Endothelial cell of umbilical vein (primary cell): ENCODE measurements at regions of chr4 and their contacts with region 1.

Region 1: DNA sequence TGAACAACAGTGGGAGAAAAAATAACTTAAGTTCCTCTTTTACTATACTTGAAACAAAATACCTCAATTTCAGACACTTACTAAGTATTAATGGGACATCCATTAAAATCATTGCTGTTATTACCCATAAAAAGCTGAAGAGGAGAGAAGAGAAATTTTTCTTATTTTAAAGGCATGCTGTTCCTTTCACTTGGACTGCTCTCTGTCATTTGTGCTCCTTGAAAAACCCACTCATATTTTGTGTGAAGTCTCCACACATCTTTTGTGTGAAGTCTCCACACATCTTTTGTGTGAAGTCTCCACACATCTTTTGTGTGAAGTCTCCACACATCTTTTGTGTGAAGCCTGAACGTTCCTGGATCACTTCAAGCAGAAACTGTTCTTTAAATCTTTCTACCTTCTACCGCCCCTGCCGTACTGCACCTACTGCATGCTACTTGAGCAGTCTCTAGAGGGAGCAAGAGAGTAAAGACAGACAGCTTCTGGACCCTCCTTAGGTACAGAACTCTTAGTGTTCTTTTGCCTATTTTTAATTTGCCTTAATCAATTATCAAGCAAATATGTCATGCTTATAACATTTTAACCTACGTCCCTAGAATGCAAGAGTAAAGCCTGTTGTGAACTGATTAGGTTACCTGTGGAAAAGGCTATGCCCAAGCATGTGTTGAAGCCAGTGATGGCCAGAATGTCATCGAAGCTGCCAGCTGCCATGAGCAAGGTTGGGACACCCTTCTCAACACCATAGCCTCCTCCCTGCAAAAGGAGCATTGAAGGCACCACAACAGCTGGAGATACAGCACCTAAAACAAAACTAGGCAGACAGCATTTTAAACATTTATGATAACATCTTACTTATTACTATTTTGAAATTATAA is 27.1 kb upstream of the SLC9B1 start:
- DNase-seq: peak; percentile 44
- H3K4me3 ChIP-seq: no peak overlapping the region
- H3K27ac ChIP-seq: no peak overlapping the region
- H3K4me1 ChIP-seq: no peaks in the 10 kb centered on the region
- H3K27me3 ChIP-seq: no peaks in the 10 kb centered on the region
- CTCF ChIP-seq: peak; percentile 57 to 67
- POLR2A ChIP-seq: no peak

Region 2: DNA sequence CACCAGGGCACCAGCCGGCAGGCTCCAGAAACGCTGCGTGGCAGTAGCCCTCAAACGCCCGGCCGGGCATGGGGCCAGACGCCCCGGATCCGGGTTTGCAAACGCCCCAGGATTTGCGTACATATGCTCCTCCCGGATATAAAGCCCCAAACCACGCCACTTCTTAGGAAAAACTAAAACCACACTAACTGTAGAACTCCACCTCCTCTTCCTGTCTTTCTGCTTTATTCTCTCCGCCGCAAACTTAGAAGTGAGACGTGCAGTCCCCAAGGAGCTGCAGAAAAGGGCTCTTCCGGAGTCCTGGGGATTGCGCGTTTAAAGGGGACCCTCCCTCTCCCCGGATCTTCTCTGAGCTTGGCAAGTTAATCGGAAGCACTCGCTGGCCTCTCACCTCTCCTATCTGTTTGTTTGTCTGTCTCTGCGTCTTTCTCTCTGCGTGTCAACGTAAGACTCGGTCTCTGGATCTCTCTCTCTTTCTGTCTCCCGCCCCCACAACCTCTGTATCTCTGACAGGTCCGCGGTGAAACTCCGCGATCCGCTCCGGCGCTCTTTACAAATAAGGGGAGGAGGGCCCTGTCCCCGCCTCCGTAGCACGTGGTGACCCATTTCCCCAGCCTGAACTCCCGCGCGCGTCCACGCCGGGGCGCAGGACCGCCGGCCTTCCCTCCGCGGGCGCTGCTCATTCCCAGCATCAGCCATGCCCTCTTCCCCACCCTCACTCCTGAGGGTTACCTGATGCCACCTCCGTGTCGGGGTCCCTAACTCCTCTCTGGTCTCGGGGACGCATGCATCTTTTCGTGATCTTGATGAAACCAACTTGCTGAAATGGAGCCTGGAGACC is 701.5 kb before region 1 on chr4 and contains the start of gene SLC39A8:
- CTCF ChIA-PET with region 1: no interaction called
- POLR2A ChIA-PET with region 1: no interaction called
- dilution Hi-C with region 1: no loop called
- intact Hi-C with region 1: no loop called
- DNase-seq: peak; percentile 79
- H3K4me3 ChIP-seq: peak within 1 kb of the TSS; percentile 39 to 90 (median 89)
- H3K27ac ChIP-seq: no peak within 1 kb of the TSS
- H3K4me1 ChIP-seq: peaks cover 19% of the 10 kb centered on the region
- H3K27me3 ChIP-seq: peaks cover 2 to 5% of the 10 kb centered on the region in 2 experiments
- CTCF ChIP-seq: peak; percentile 67 to 84
- POLR2A ChIP-seq: peak; percentile 42
- total RNA-seq, gene SLC39A8: 6.0 and 6.7 TPM in 2 replicates

Region 3: GRCh38 chr4:103032574-103032973 is 14.1 kb before region 1 on chr4:
- CTCF ChIA-PET with region 1: interaction called, 12 read pairs
- POLR2A ChIA-PET with region 1: no interaction called
- dilution Hi-C with region 1: no loop called
- intact Hi-C with region 1: no loop called
- DNase-seq: peak; percentile 6
- H3K4me3 ChIP-seq: no peak overlapping the region
- H3K27ac ChIP-seq: no peak overlapping the region
- H3K4me1 ChIP-seq: no peaks in the 10 kb centered on the region
- H3K27me3 ChIP-seq: no peaks in the 10 kb centered on the region
- CTCF ChIP-seq: peak; percentile 39 to 55
- POLR2A ChIP-seq: no peak

Region 4: DNA sequence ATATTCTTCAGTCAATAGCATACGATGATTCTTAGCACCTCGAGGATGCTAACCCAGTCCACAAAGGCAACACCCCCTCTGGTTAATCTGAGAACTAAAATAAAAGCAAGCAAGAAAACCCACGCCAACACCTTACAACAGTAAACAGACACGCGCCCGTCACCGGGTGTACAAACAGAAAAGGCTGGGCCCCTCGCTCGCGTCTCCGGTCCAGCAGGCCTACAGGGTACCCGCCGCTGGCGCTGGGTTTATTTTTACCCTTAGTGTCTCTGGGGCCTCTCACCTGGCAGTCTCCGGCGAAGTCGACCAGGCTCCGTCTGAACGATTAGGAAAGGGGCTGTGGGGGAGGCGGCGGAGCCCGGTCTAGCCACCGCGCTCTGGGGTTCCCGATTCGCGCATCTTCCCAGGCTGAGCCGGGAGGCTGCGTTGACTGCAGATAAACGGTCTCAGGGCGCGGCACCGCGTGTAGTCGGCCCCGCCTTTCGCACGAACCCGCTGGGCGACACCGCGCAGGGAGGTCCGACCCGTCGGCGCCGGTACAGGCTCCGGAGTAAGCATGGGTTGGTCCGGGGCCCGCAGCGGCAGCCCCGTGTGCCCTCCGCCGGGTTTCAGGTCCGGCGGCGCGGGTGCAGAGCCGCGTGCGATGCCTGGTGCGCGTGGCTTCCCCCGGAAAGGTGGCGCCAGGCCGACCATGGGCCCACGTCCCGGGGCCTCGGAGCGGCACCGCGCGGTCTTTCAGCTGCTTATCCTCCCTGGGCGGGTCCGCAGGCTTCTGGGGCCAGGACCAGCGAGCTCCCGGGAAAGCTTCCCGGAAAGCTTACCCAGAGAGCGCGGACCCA is 29.5 kb after region 1 on chr4:
- CTCF ChIA-PET with region 1: interaction called, 3 read pairs
- POLR2A ChIA-PET with region 1: no interaction called
- dilution Hi-C with region 1: no loop called
- intact Hi-C with region 1: loop called (anchors 2 kb)
- DNase-seq: peak; percentile 69
- H3K4me3 ChIP-seq: peak overlapping the region; percentile 76 to 83 (median 79)
- H3K27ac ChIP-seq: peak overlapping the region; percentile 92
- H3K4me1 ChIP-seq: peaks cover 15% of the 10 kb centered on the region
- H3K27me3 ChIP-seq: no peaks in the 10 kb centered on the region
- CTCF ChIP-seq: no peak
- POLR2A ChIP-seq: peak; percentile 70